ENCODE measurements at regions of chr7 and their contacts with region 1.

Region 1: GRCh38 chr7:143490717-143491306 is 13.1 kb downstream of the TAS2R41 start:
- DNase-seq: no peak
- H3K4me3 ChIP-seq: no peak overlapping the region
- H3K27me3 ChIP-seq: no peaks in the 10 kb centered on the region
- CTCF ChIP-seq: peak; percentile 78

Region 2: GRCh38 chr7:143479055-143479766 is 11.6 kb before region 1 on chr7:
- CTCF ChIA-PET with region 1: interaction called, 18 read pairs
- POLR2A ChIA-PET with region 1: no interaction called
- DNase-seq: peak; percentile 85
- H3K4me3 ChIP-seq: no peak overlapping the region
- H3K27me3 ChIP-seq: no peaks in the 10 kb centered on the region
- CTCF ChIP-seq: no peak

Measured in BJ (cell line).